ENCODE measurements at regions of chr1 and their contacts with region 1.

Region 1: GRCh38 chr1:35726450-35727433 is 8.1 kb upstream of the C1orf216 start:
- DNase-seq: peak in 8 of 9 donors; percentile 16 to 59 (median 45)
- ATAC-seq: peak; percentile 90
- H3K4me3 ChIP-seq: no peak overlapping the region
- H3K4me3 Mint-ChIP-seq: no peak overlapping the region
- H3K27ac ChIP-seq: no peak overlapping the region
- H3K27ac Mint-ChIP-seq: no peak overlapping the region
- H3K4me1 ChIP-seq: no peaks in the 10 kb centered on the region
- H3K4me1 Mint-ChIP-seq: peaks cover 0 to 5% (median 0%) of the 10 kb centered on the region in 7 donors
- H3K27me3 ChIP-seq: no peaks in the 10 kb centered on the region
- H3K27me3 Mint-ChIP-seq: no peaks in the 10 kb centered on the region

Region 2: DNA sequence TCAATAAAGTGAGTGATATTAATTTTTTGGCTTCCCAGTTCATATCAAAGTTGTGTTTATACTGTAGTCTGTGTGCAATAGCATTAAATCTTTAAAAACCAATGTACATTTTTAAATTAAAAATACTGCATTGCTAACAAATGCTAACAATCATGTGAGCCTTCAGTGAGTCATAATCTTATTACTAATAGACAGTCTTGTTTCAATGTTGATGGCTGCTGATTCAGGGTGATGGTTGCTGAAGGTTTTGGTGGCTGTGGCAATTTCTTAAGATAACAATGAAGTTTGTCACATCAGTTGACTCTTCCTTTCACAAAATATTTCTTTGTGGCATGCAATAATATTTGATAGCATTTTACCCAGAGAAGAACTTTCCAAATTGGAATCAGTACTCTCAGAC is 349.2 kb before region 1 on chr1:
- CTCF ChIA-PET with region 1: no interaction called
- POLR2A ChIA-PET with region 1: no interaction called
- intact Hi-C with region 1: no loop called
- DNase-seq: no peak
- ATAC-seq: no peak
- H3K4me3 ChIP-seq: no peak overlapping the region
- H3K4me3 Mint-ChIP-seq: no peak overlapping the region
- H3K27ac ChIP-seq: no peak overlapping the region
- H3K27ac Mint-ChIP-seq: no peak overlapping the region
- H3K4me1 ChIP-seq: no peaks in the 10 kb centered on the region
- H3K4me1 Mint-ChIP-seq: no peaks in the 10 kb centered on the region
- H3K27me3 ChIP-seq: no peaks in the 10 kb centered on the region
- H3K27me3 Mint-ChIP-seq: no peaks in the 10 kb centered on the region

Region 3: DNA sequence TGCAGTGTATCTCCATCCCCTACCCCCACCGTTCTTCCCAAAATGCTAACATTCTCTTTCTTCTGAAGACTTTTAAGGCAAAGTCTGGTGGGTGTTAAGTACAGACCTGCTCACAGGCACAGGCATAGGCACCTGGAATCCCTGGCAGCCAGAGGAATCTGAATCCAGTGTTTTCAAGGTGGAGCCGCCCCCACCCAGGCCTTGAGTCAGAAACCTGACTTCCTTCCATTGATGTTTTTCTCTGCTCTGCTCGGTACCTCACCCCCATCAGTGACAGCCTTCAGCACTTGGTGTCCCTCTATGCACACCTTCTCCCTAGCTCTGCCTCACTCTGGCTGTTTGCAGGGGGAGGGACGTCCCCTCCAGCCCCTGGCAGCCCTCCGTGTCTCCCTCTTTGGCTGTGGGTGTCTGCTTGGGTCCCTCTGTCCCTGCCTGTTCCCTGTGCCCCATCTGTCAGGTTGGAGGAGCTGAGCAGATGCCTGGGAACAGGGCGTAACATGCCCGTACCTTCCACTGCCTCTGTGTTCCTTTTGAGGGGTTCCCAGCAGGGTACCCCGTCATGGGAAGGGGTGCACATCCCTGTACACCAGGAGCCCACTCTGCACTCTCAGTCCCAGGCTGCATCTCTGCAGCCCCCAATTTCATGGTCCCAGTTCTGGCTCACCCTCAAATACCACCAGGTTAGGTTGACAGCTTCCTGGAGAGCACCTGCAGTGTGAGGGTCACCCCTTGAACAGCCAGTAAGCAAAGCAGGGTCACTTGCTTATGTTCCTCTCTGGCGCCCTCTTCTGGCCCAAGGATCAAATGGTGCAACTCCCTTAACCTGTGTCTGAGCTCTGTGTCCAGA is 162.5 kb before region 1 on chr1:
- CTCF ChIA-PET with region 1: interaction called, 42 read pairs
- POLR2A ChIA-PET with region 1: interaction called, 3 read pairs
- intact Hi-C with region 1: loop called (anchors 1 kb)
- DNase-seq: peak; percentile 58 to 82 (median 70)
- ATAC-seq: peak; percentile 79
- H3K4me3 ChIP-seq: no peak overlapping the region
- H3K4me3 Mint-ChIP-seq: peak overlapping the region in 1 of 10 donors; percentile 56
- H3K27ac ChIP-seq: no peak overlapping the region
- H3K27ac Mint-ChIP-seq: peak overlapping the region in 7 of 9 donors; percentile 23 to 91 (median 60)
- H3K4me1 ChIP-seq: no peaks in the 10 kb centered on the region
- H3K4me1 Mint-ChIP-seq: peaks cover 25 to 41% (median 31%) of the 10 kb centered on the region in 7 donors
- H3K27me3 ChIP-seq: no peaks in the 10 kb centered on the region
- H3K27me3 Mint-ChIP-seq: no peaks in the 10 kb centered on the region